ENCODE measurements at regions of chr10 and their contacts with region 1.

Region 1: DNA sequence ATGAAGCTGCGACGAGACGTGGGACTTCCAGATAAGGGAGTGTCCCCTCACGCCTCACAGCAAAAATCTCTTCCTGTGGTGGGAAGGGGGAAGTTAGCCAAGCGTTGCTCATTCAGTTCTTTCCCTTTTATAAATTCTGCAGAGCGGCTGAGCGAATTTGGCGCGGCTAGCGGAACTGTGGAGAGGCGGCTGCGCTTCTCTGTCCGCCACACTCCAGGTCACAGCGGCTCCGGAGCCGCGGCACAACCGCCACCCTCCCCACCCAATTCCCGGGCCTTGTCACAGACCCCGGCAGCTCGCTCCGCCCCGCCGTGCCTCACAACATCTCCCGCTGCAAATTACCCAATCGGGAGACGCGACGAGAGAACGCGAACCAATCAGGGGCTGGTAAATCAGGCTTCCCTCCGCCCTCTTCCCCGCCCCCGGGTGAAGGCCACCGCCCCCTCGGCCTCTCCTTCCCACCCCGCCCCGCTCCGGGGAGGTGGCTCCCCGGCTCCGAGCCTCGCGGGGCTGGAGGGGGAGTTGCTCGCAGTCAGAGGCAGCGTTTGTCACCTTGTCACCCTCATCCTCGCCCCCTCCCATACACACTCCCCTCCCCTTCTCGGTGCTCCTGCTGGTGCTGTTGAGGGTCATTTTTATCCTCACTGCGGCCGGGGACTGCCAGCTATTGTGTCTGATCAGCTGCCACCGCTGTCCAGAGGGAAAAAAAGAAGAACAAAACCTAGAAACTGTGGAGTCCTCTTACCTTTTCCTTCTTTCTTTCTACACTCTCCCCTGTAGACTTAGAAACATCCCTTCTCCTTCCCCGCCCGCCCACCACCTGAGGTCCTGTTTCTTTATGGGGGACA is 918 bp upstream of the ARHGAP21 start:
- DNase-seq: peak; percentile 92
- H3K4me3 Mint-ChIP-seq: peak overlapping the region; percentile 93
- H3K27ac Mint-ChIP-seq: peak overlapping the region; percentile 96
- H3K4me1 Mint-ChIP-seq: peaks cover 29% of the 10 kb centered on the region
- H3K27me3 Mint-ChIP-seq: no peaks in the 10 kb centered on the region

Region 2: GRCh38 chr10:23438550-23439441 is 1285.8 kb before region 1 on chr10 and contains the start of gene OTUD1:
- intact Hi-C with region 1: loop called (anchors 2 kb)
- DNase-seq: peak; percentile 94
- H3K4me3 Mint-ChIP-seq: peak within 1 kb of the TSS; percentile 83
- H3K27ac Mint-ChIP-seq: peak within 1 kb of the TSS; percentile 84
- H3K4me1 Mint-ChIP-seq: peaks cover 47% of the 10 kb centered on the region
- H3K27me3 Mint-ChIP-seq: peaks cover 5% of the 10 kb centered on the region
- total RNA-seq, gene OTUD1: 19.1 and 20.3 TPM in 2 replicates

Region 3: GRCh38 chr10:24603333-24603732 is 121.3 kb before region 1 on chr10:
- intact Hi-C with region 1: loop called (anchors 1 kb)
- DNase-seq: no peak
- H3K4me3 Mint-ChIP-seq: peak overlapping the region; percentile 45
- H3K27ac Mint-ChIP-seq: peak overlapping the region; percentile 95
- H3K4me1 Mint-ChIP-seq: peaks cover 38% of the 10 kb centered on the region
- H3K27me3 Mint-ChIP-seq: no peaks in the 10 kb centered on the region

Region 4: GRCh38 chr10:24706479-24707118 is 18.0 kb before region 1 on chr10:
- intact Hi-C with region 1: loop called (anchors 1 kb)
- DNase-seq: peak; percentile 26
- H3K4me3 Mint-ChIP-seq: no peak overlapping the region
- H3K27ac Mint-ChIP-seq: no peak overlapping the region
- H3K4me1 Mint-ChIP-seq: peaks cover 23% of the 10 kb centered on the region
- H3K27me3 Mint-ChIP-seq: no peaks in the 10 kb centered on the region

Region 5: GRCh38 chr10:24901686-24902399 is 177.2 kb after region 1 on chr10:
- intact Hi-C with region 1: loop called (anchors 1 kb)
- DNase-seq: no peak
- H3K4me3 Mint-ChIP-seq: no peak overlapping the region
- H3K27ac Mint-ChIP-seq: peak overlapping the region; percentile 73
- H3K4me1 Mint-ChIP-seq: peaks cover 33% of the 10 kb centered on the region
- H3K27me3 Mint-ChIP-seq: no peaks in the 10 kb centered on the region

Region 6: GRCh38 chr10:24952707-24953645 is 228.4 kb after region 1 on chr10:
- intact Hi-C with region 1: loop called (anchors 1 kb)
- DNase-seq: peak; percentile 7
- H3K4me3 Mint-ChIP-seq: peak overlapping the region; percentile 79
- H3K27ac Mint-ChIP-seq: no peak overlapping the region
- H3K4me1 Mint-ChIP-seq: peaks cover 16% of the 10 kb centered on the region
- H3K27me3 Mint-ChIP-seq: no peaks in the 10 kb centered on the region

Region 7: DNA sequence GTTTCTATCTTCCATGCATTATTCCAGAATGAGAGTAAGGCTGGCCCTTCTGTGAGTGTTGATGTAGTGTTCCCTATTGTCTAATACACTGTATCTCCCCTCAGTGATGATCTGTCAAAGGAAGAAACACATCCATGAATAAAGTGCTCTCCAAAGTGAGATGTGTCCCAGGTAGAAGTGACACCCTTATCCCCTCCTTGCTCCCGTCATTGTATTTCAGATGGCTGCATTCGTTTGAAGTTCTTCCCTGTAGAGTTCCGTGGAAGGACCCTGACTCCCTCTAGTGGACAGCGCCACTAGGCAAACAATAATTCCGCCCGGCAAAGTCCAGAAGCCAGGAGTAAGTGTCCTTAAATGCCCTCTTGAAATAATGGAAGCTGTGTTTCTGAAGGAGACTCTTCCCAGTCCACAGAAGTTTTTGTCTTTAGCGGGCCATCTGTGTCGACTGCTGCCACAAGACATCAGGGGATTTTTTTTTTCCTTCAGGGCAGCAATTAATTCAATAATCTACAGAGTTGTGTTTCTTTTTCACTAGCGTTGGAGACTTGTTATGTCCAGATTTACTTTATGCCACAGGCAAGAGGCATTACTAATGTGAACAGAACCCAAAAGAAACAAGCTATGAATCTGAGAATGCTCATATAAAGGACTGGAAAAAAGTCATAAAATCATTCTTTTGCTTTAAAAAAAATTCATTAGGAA is 356.4 kb after region 1 on chr10:
- intact Hi-C with region 1: loop called (anchors 2 kb)
- DNase-seq: peak; percentile 45
- H3K4me3 Mint-ChIP-seq: no peak overlapping the region
- H3K27ac Mint-ChIP-seq: no peak overlapping the region
- H3K4me1 Mint-ChIP-seq: peaks cover 15% of the 10 kb centered on the region
- H3K27me3 Mint-ChIP-seq: peaks cover 20% of the 10 kb centered on the region

Measured in activated T-helper 1 cell treated with anti-CD3 and anti-CD28 coated beads, Interleukin-12 subunit alpha, Interleukin-12 subunit beta, Interleukin-2, Interleukin-4 antibody, amounts not matched to agents 30 ng/mL and 10 ng/mL and 1 ng/mL, durations not matched to agents 14 hours and 24 hours and 36 hours (primary cell).